ENCODE measurements at regions of chr22 and their contacts with region 1.

Region 1: GRCh38 chr22:37817705-37818408 is 5.3 kb upstream of the GALR3 start:
- DNase-seq: peak; percentile 83
- H3K4me3 Mint-ChIP-seq: no peak overlapping the region
- H3K27ac Mint-ChIP-seq: no peak overlapping the region
- H3K4me1 Mint-ChIP-seq: peaks cover 12% of the 10 kb centered on the region
- H3K27me3 Mint-ChIP-seq: peaks cover 13% of the 10 kb centered on the region

Region 2: DNA sequence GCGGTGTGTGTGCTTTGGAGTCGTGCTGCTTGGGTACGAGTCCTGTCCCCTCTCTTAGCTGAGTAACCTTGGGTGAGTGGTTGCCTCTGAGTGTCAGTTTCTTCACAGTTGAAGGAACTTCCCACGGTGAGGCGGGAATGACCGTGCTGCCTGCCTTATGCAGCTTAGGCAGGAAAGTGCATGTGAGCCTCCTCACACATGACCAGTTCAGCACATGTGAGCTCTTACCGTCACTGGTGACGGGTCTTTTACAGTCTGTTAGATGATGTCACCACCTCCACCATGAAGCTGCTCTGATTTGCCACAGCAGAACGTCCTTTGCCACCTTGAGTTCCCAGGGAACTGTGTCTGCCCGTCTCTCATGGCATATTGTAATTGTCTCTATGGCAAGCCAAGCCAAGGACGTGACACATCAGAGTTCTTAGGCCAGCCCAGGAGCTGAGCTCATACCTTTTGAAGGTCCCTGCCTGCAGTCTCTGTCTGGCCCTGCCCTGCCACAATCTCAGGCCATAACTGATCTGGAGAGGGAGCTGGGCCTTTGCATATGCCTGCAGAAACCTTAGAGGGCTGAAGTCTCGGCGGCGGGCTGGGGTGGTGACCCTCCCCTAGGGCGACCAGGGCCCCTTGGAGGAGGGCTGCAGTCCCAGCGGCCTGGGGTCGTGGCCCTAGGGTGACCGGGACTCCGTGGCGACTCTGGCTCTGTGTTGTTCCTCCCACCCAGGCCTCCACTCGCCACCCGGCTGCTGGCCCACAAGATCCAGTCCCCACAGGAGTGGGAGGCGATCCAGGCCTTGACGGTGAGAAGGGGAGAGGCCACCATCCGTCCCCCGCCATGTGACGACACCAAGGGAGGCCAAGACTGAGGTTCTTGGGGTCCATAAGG is 201.4 kb before region 1 on chr22:
- CTCF ChIA-PET with region 1: no interaction called
- intact Hi-C with region 1: no loop called
- DNase-seq: no peak
- H3K4me3 Mint-ChIP-seq: no peak overlapping the region
- H3K27ac Mint-ChIP-seq: no peak overlapping the region
- H3K4me1 Mint-ChIP-seq: no peaks in the 10 kb centered on the region
- H3K27me3 Mint-ChIP-seq: no peaks in the 10 kb centered on the region

Region 3: DNA sequence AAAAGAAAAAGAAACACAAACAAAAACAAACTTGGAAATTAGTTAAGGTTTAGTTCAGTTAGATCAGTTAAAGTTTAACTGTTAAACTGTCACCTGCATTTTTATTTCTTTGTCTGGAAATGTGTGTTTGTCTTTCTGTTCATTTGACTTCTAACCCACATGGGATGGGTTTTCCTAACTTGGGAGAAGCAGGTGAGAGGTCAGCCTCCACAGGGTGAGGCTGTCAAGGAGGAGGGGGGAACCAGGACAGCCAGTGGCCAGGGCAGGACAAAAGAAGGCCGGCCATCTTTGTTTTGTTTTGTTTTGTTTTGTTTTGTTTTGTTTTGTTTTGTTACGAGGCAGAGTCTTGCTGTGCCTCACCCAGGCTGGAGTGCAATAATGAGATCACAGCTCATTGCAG is 23.5 kb before region 1 on chr22:
- CTCF ChIA-PET with region 1: no interaction called
- intact Hi-C with region 1: no loop called
- DNase-seq: no peak
- H3K4me3 Mint-ChIP-seq: no peak overlapping the region
- H3K27ac Mint-ChIP-seq: no peak overlapping the region
- H3K4me1 Mint-ChIP-seq: no peaks in the 10 kb centered on the region
- H3K27me3 Mint-ChIP-seq: no peaks in the 10 kb centered on the region

Region 4: DNA sequence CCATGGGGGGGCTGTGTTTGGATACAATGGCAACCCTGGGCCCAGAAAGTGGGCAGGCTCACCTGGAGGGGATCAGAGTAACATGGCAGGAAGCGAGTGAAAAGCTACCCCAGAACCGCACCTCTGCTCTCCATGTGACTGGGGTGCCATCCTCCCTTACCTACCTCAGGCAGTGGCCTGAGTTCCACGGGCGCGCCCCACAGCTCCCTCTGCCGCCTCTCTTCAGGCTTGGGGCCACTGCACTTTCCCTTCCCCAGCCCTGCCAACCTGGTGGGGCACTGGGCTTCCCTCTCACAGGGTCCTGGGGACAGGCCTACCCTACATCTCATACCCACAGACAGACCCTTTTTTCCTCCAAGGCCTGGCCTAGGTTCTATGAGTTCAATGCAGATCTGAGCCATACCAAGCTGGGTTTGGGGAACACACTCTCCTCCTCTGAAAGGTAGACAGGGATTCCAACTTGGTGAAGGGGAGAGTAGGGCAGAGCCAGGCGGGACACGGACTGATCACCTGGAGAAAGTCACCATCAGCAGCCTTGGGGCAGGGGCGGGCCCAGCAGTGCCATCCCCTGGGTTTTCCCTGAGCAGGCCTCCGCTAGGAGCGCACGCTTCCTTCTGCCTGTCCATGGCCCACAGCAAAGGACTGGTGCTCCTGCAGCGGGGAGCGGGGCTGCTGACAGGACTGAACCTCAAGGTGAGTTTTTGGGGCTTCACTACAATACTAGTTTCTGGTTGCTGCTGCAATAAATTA is 12.4 kb after region 1 on chr22:
- CTCF ChIA-PET with region 1: interaction called, 23 read pairs
- intact Hi-C with region 1: no loop called
- DNase-seq: no peak
- H3K4me3 Mint-ChIP-seq: no peak overlapping the region
- H3K27ac Mint-ChIP-seq: no peak overlapping the region
- H3K4me1 Mint-ChIP-seq: peaks cover 2% of the 10 kb centered on the region
- H3K27me3 Mint-ChIP-seq: peaks cover 3% of the 10 kb centered on the region

Region 5: GRCh38 chr22:37862570-37863325 is 44.9 kb after region 1 on chr22:
- CTCF ChIA-PET with region 1: interaction called, 130 read pairs
- intact Hi-C with region 1: loop called (anchors 1 kb)
- DNase-seq: no peak
- H3K4me3 Mint-ChIP-seq: no peak overlapping the region
- H3K27ac Mint-ChIP-seq: no peak overlapping the region
- H3K4me1 Mint-ChIP-seq: no peaks in the 10 kb centered on the region
- H3K27me3 Mint-ChIP-seq: no peaks in the 10 kb centered on the region

Region 6: GRCh38 chr22:37953437-37954179 is 135.8 kb after region 1 on chr22 and contains the starts of genes C22orf23 and POLR2F:
- CTCF ChIA-PET with region 1: interaction called, 4 read pairs
- intact Hi-C with region 1: loop called (anchors 5 kb)
- DNase-seq: peak; percentile 98
- H3K4me3 Mint-ChIP-seq: peak within 1 kb of the TSS; percentile 98
- H3K27ac Mint-ChIP-seq: peak within 1 kb of the TSS; percentile 79
- H3K4me1 Mint-ChIP-seq: peaks cover 31% of the 10 kb centered on the region
- H3K27me3 Mint-ChIP-seq: peaks cover 5% of the 10 kb centered on the region
- total RNA-seq, gene C22orf23: not detected
- total RNA-seq, gene POLR2F: 70.1 to 70.6 TPM

Region 7: GRCh38 chr22:38193580-38193979 is 375.7 kb after region 1 on chr22:
- CTCF ChIA-PET with region 1: no interaction called
- intact Hi-C with region 1: no loop called
- DNase-seq: no peak
- H3K4me3 Mint-ChIP-seq: no peak overlapping the region
- H3K27ac Mint-ChIP-seq: no peak overlapping the region
- H3K4me1 Mint-ChIP-seq: peaks cover 3% of the 10 kb centered on the region
- H3K27me3 Mint-ChIP-seq: peaks cover 1% of the 10 kb centered on the region

Measured in activated naive CD4-positive, alpha-beta T cell treated with anti-CD3 and anti-CD28 coated beads for 36 hours (primary cell).